Activated B cell treated with CpG ODN at 0.5 μM for 24 hours (primary cell): ENCODE measurements at regions of chr3 and their contacts with region 1.

Region 1: DNA sequence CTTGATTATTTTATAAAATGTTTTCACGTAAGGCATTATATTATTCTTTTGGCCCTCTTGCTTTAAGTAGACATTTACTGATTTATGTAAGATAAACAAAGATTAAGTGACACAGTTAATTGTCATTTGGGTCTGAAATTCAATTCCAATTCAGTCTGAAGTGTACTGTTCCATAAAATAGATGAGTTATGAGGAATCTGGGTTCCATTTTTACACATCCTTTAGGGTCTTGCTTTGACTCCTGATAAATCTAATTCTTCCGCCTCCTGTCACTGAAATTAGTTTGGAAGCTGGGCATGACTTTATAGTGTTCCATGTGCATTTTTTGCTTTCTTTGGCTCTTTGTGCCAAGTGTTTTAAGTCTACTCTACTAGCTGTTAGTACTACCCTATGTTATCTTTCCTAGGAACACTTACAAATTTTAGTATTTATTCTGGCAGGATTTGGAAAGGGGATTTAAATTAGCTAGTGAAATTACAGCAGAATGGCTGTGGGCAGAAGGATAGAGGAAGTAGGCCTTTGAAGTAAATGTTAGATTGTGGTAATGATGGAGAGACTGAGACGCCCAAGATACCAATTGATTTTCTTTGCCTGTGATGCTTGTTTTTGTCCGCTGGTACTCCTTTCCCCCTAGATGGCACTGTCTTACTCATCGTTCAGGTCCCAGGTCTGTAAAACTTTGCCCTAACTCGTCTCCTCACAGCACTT is 14.3 kb downstream of the ARL8B start:
- DNase-seq: no peak
- ATAC-seq: peak; percentile 70
- H3K4me3 Mint-ChIP-seq: peak overlapping the region; percentile 40
- H3K27ac Mint-ChIP-seq: peak overlapping the region; percentile 83
- H3K4me1 Mint-ChIP-seq: peaks cover 74% of the 10 kb centered on the region
- H3K27me3 Mint-ChIP-seq: no peaks in the 10 kb centered on the region
- CTCF ChIP-seq: peak; percentile 29

Region 2: GRCh38 chr3:5110337-5110736 is 26.0 kb before region 1 on chr3:
- CTCF ChIA-PET with region 1: no interaction called
- POLR2A ChIA-PET with region 1: no interaction called
- intact Hi-C with region 1: no loop called
- DNase-seq: no peak
- ATAC-seq: no peak
- H3K4me3 Mint-ChIP-seq: no peak overlapping the region
- H3K27ac Mint-ChIP-seq: no peak overlapping the region
- H3K4me1 Mint-ChIP-seq: no peaks in the 10 kb centered on the region
- H3K27me3 Mint-ChIP-seq: peaks cover 1% of the 10 kb centered on the region
- CTCF ChIP-seq: no peak

Region 3: GRCh38 chr3:5151586-5151985 is 15.2 kb after region 1 on chr3:
- CTCF ChIA-PET with region 1: no interaction called
- POLR2A ChIA-PET with region 1: no interaction called
- intact Hi-C with region 1: loop called (anchors 1 kb)
- DNase-seq: no peak
- ATAC-seq: no peak
- H3K4me3 Mint-ChIP-seq: no peak overlapping the region
- H3K27ac Mint-ChIP-seq: no peak overlapping the region
- H3K4me1 Mint-ChIP-seq: peaks cover 72% of the 10 kb centered on the region
- H3K27me3 Mint-ChIP-seq: no peaks in the 10 kb centered on the region
- CTCF ChIP-seq: no peak

Region 4: GRCh38 chr3:5187156-5187919 is 51.0 kb after region 1 on chr3 and contains the start of gene EDEM1:
- CTCF ChIA-PET with region 1: interaction called, 8 read pairs
- POLR2A ChIA-PET with region 1: interaction called, 55 read pairs
- intact Hi-C with region 1: loop called (anchors 1 kb)
- DNase-seq: peak; percentile 100
- ATAC-seq: peak; percentile 88
- H3K4me3 Mint-ChIP-seq: peak within 1 kb of the TSS; percentile 98
- H3K27ac Mint-ChIP-seq: peak within 1 kb of the TSS; percentile 99
- H3K4me1 Mint-ChIP-seq: peaks cover 73% of the 10 kb centered on the region
- H3K27me3 Mint-ChIP-seq: no peaks in the 10 kb centered on the region
- CTCF ChIP-seq: no peak
- total RNA-seq, gene EDEM1: 171 and 185 TPM in 2 replicates

Region 5: DNA sequence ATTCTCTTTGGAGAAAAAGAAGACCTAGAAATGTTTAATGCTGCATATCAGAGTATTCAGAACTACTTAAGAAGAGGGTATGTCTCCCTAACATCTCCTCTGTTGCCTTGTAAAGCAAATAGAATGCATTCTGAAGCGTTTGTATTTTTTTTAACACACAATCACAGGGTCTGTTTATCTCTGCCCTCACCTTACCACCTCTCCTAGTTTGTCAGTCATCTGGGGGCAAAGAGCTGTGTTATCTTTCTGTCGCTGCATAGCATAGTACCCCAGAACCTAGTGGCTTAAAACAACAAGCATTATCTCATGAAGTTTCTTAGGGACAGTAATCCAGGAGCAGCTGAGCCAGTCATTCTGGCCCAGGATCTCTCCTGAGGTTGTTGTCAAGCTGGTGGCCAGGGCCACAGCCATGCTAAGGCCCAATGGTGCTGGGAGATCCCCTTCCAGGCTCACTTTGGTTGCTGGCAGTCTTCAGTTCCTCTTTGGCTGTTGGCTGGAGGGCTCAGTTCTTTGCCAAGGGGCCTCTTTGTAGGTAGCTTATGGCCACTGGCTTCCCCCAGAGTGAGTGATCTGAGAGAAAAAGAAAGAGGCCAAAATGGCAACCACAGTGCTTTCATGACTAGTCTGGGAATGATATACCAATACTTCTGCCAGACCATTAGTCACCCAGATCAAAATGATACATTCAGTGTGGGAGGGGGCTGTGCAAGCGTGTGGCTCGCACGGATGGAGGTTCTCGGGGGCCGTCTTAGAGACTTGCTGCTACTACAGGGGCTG is 69.0 kb after region 1 on chr3:
- CTCF ChIA-PET with region 1: interaction called, 4 read pairs
- POLR2A ChIA-PET with region 1: interaction called, 6 read pairs
- intact Hi-C with region 1: loop called (anchors 1 kb)
- DNase-seq: peak; percentile 41
- ATAC-seq: peak; percentile 98
- H3K4me3 Mint-ChIP-seq: peak overlapping the region; percentile 37
- H3K27ac Mint-ChIP-seq: peak overlapping the region; percentile 86
- H3K4me1 Mint-ChIP-seq: peaks cover 42% of the 10 kb centered on the region
- H3K27me3 Mint-ChIP-seq: no peaks in the 10 kb centered on the region
- CTCF ChIP-seq: no peak

Region 6: DNA sequence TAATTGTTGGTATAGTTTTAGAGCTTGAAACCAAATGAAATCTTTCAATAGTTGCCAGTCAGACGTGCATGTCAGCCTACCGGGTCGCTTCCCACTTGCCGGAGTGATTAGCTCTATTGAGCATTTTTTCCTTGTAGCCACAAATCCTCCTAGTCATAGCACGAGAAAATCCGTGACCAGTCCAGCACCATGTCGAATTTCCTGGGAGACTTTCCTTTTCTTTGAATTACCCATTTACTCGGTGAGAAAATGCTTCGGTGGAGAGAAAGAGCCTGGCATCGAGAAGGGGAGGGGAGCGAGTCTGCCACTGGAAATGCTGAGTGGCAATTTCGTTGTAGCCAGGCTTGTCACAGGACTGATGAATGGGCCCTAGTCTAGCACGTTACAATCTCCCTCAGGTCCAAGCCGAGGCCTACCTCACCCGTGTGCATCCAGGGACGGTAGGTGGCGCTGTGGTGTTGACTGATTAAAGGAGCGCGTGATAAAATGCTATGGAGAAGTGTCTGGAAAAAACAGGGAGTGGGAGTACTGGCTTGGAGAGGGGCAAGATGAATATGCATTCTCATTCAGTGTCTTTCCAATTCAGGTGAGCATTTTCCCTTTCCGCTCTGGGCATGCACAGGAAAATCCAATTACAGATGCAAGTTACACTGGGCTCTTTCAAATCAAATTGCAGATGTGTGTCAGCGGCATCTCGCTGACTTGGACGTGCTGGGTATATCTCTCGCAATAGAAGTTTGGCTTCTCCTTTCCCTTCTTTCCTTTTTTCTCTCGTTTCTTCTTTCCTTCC is 289.9 kb after region 1 on chr3:
- CTCF ChIA-PET with region 1: no interaction called
- POLR2A ChIA-PET with region 1: no interaction called
- intact Hi-C with region 1: loop called (anchors 2 kb)
- DNase-seq: peak; percentile 44
- ATAC-seq: peak; percentile 70
- H3K4me3 Mint-ChIP-seq: no peak overlapping the region
- H3K27ac Mint-ChIP-seq: no peak overlapping the region
- H3K4me1 Mint-ChIP-seq: peaks cover 18% of the 10 kb centered on the region
- H3K27me3 Mint-ChIP-seq: peaks cover 5% of the 10 kb centered on the region
- CTCF ChIP-seq: no peak